ENCODE measurements at regions of chr2 and their contacts with region 1.

Region 1: GRCh38 chr2:156332534-156333273 is at the start of gene NR4A2:
- DNase-seq: peak; percentile 91 to 97 (median 94)
- ATAC-seq: peak; percentile 83 to 85
- H3K4me3 ChIP-seq: peak within 1 kb of the TSS; percentile 85
- H3K27ac ChIP-seq: peak within 1 kb of the TSS; percentile 99
- H3K4me1 ChIP-seq: peaks cover 2% of the 10 kb centered on the region
- H3K27me3 ChIP-seq: no peaks in the 10 kb centered on the region
- total RNA-seq, gene NR4A2: 3.2 to 14.5 (median 6.1) TPM

Region 2: DNA sequence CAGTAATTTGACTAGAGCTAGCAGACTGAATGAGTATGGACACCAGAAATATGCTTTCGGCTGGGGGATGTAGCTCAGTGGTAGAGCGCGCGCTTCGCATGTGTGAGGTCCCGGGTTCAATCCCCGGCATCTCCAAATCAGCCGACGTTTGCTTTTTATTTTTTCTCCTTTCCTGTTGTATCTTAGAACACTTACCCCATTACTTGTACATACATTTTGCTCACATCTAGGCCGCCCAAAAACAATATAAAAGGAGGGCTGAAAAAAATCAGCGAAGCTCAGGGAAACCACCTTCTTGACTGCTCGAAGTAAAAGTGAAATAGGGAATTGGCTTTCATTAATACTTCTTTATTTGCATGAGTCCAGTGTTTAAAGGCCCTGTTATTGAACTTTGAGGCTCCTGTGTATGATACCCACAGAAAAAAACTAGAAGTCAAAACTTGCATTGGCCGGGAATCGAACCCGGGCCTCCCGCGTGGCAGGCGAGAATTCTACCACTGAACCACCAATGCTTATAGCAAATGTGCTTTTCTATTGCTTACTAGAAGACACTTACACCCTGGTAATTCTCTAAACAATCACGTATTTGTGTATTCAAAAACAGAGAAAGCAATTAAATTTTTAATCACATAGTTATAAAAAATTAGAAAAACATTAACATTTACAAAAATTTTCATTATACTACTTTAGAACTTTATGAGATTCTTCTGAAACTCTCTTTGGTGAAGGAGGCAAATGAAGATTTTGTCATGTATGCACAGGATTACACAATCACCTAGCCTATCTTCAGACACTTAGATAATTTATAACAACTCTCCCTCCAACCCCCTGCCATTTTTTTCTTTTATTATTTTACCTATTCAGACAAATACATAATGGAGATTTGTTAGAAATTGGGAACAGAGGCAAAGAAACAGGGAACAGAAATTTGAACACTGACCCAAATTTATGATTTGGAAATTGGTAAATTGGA is 68.3 kb after region 1 on chr2:
- intact Hi-C with region 1: loop called in 2 of 4 experiments (anchors 2 to 5 kb)
- DNase-seq: peak; percentile 55 to 83 (median 82)
- ATAC-seq: peak; percentile 94 to 95
- H3K4me3 ChIP-seq: peak overlapping the region; percentile 97
- H3K27ac ChIP-seq: peak overlapping the region; percentile 82
- H3K4me1 ChIP-seq: no peaks in the 10 kb centered on the region
- H3K27me3 ChIP-seq: no peaks in the 10 kb centered on the region

Region 3: GRCh38 chr2:156435715-156436496 is 103.2 kb after region 1 on chr2 and contains the start of gene GPD2:
- intact Hi-C with region 1: loop called in 1 of 4 experiments (anchors 5 kb)
- DNase-seq: peak; percentile 96 to 97 (median 97)
- ATAC-seq: peak; percentile 99
- H3K4me3 ChIP-seq: peak within 1 kb of the TSS; percentile 75
- H3K27ac ChIP-seq: peak within 1 kb of the TSS; percentile 88
- H3K4me1 ChIP-seq: peaks cover 2% of the 10 kb centered on the region
- H3K27me3 ChIP-seq: no peaks in the 10 kb centered on the region
- total RNA-seq, gene GPD2: 14.1 to 22.3 (median 16.9) TPM

Region 4: DNA sequence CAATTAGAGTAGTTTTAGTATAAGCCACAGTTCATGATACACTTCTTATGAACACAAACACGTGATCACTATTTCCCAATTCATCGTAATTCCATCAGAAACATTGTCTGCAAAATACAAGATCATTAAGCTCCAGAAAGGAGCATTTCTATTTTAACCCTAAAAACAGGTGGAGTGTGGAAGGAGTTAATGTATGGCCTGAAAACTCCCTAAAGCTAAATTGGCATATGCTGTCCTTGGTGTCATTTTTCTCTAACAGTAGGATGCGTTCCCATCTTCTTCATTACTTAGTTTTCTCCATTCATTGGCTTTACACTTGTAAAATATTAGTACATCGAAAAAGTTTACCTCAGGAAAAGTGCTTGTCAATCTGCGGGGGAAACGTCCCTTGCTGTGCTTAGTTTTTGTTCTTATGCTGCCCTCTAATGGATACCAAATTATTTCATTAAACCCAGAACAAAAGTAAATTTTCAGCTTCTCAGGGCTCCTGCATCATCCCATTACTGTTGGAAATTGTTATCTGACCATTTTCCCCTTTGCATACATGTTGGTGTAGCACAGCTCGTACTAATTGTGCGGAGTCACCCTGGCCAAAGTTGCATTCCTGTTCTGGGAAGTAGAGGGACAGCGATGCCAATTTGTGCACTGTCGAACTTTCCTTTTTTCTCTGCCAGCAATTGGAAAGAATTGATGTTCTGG is 256.8 kb after region 1 on chr2:
- intact Hi-C with region 1: loop called in 3 of 4 experiments (anchors 10 kb)
- DNase-seq: peak in 2 of 3 donors; percentile 18 to 43
- ATAC-seq: peak; percentile 54 to 80
- H3K4me3 ChIP-seq: no peak overlapping the region
- H3K27ac ChIP-seq: no peak overlapping the region
- H3K4me1 ChIP-seq: no peaks in the 10 kb centered on the region
- H3K27me3 ChIP-seq: no peaks in the 10 kb centered on the region